ENCODE measurements at regions of chr1 and their contacts with region 1.

Region 1: DNA sequence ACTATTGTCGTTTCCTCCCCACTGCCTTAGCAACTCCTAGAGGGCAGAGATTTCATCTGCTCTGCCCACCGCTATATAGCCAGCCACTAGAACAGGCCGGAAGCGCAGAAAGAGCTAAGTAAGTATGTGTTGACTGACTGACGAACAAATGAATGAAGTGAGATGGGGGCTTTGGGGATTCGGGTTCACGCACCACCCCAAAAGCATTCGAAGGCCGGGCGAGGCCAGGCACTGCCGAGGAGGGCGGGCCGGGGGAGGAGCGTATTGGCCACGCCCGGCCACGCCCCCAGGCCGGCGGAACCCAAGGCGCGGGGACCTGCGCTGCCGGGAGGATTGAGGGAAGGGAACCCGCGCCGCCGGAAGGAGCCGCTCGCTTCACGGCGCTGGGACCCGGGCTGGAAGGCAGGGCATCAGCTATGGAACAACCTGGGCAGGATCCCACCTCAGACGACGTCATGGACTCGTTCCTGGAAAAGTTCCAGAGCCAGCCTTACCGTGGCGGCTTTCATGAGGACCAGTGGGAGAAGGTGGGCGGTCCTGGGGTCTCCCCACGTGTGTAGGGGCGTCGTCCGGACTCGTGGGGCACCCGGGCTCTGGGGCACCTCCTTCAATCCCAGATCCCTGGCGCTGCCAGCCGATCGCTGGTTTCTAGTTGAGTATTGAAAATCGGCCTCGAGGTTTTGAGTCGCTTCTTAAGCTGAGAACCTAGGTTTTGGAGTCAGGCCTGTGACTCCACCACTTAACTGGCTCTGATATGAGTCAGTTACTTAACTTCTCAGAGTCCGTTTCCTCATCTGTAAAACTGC is at the start of gene TTC4:
- DNase-seq: peak; percentile 71 to 92 (median 82)
- H3K4me3 ChIP-seq: peak within 1 kb of the TSS; percentile 44 to 100 (median 90)
- H3K27ac ChIP-seq: peak within 1 kb of the TSS in 54 of 59 donors; percentile 20 to 89 (median 76)
- H3K27me3 ChIP-seq: no peaks in the 10 kb centered on the region
- CTCF ChIP-seq: peak in 39 of 56 donors; percentile 10 to 58 (median 30)
- total RNA-seq, gene TTC4: 17.2 to 30.3 (median 23.6) TPM

Region 2: GRCh38 chr1:54542120-54542961 is 173.4 kb before region 1 on chr1:
- intact Hi-C with region 1: loop called (anchors 5 to 10 kb)
- DNase-seq: peak in 8 of 10 donors; percentile 41 to 76 (median 56)
- H3K4me3 ChIP-seq: peak overlapping the region; percentile 26 to 74 (median 57)
- H3K27ac ChIP-seq: peak overlapping the region in 56 of 59 donors; percentile 6 to 92 (median 74)
- H3K27me3 ChIP-seq: no peaks in the 10 kb centered on the region
- CTCF ChIP-seq: peak in 36 of 56 donors; percentile 11 to 55 (median 28)

Region 3: GRCh38 chr1:54547601-54548388 is 167.9 kb before region 1 on chr1 and contains the start of gene ACOT11:
- intact Hi-C with region 1: loop called (anchors 5 to 10 kb)
- DNase-seq: peak; percentile 47 to 86 (median 82)
- H3K4me3 ChIP-seq: peak within 1 kb of the TSS in 58 of 59 donors; percentile 8 to 66 (median 48)
- H3K27ac ChIP-seq: peak within 1 kb of the TSS in 58 of 59 donors; percentile 24 to 94 (median 76)
- H3K27me3 ChIP-seq: no peaks in the 10 kb centered on the region
- CTCF ChIP-seq: peak in 55 of 56 donors; percentile 29 to 82 (median 59)
- total RNA-seq, gene ACOT11: 13.3 to 66.0 (median 31.4) TPM

Region 4: GRCh38 chr1:54904476-54905048 is 188.9 kb after region 1 on chr1:
- intact Hi-C with region 1: no loop called
- DNase-seq: no peak
- H3K4me3 ChIP-seq: no peak overlapping the region
- H3K27ac ChIP-seq: no peak overlapping the region
- H3K27me3 ChIP-seq: no peaks in the 10 kb centered on the region
- CTCF ChIP-seq: no peak